Activated naive CD4-positive, alpha-beta T cell treated with anti-CD3 and anti-CD28 coated beads for 36 hours (primary cell): ENCODE measurements at regions of chr18 and their contacts with region 1.

Region 1: GRCh38 chr18:11553098-11553940 is 56.1 kb upstream of the SLC35G4 start:
- DNase-seq: peak; percentile 53
- H3K4me3 Mint-ChIP-seq: no peak overlapping the region
- H3K27ac Mint-ChIP-seq: no peak overlapping the region
- H3K4me1 Mint-ChIP-seq: no peaks in the 10 kb centered on the region
- H3K27me3 Mint-ChIP-seq: peaks cover 4% of the 10 kb centered on the region

Region 2: GRCh38 chr18:10560450-10561045 is 992.8 kb before region 1 on chr18:
- CTCF ChIA-PET with region 1: no interaction called
- intact Hi-C with region 1: loop called (anchors 1 kb)
- DNase-seq: peak; percentile 82
- H3K4me3 Mint-ChIP-seq: no peak overlapping the region
- H3K27ac Mint-ChIP-seq: no peak overlapping the region
- H3K4me1 Mint-ChIP-seq: peaks cover 3% of the 10 kb centered on the region
- H3K27me3 Mint-ChIP-seq: no peaks in the 10 kb centered on the region

Region 3: GRCh38 chr18:11310476-11311086 is 242.7 kb before region 1 on chr18:
- CTCF ChIA-PET with region 1: interaction called, 8 read pairs
- intact Hi-C with region 1: loop called (anchors 1 kb)
- DNase-seq: peak; percentile 45
- H3K4me3 Mint-ChIP-seq: no peak overlapping the region
- H3K27ac Mint-ChIP-seq: no peak overlapping the region
- H3K4me1 Mint-ChIP-seq: no peaks in the 10 kb centered on the region
- H3K27me3 Mint-ChIP-seq: no peaks in the 10 kb centered on the region

Region 4: GRCh38 chr18:11591957-11592356 is 38.6 kb after region 1 on chr18:
- CTCF ChIA-PET with region 1: no interaction called
- intact Hi-C with region 1: no loop called
- DNase-seq: no peak
- H3K4me3 Mint-ChIP-seq: no peak overlapping the region
- H3K27ac Mint-ChIP-seq: no peak overlapping the region
- H3K4me1 Mint-ChIP-seq: peaks cover 11% of the 10 kb centered on the region
- H3K27me3 Mint-ChIP-seq: peaks cover 9% of the 10 kb centered on the region